ENCODE measurements at regions of chr12 and their contacts with region 1.

Region 1: GRCh38 chr12:6851921-6852650 is at the start of gene USP5:
- DNase-seq: peak; percentile 99
- H3K4me3 Mint-ChIP-seq: peak within 1 kb of the TSS; percentile 86
- H3K27ac Mint-ChIP-seq: peak within 1 kb of the TSS; percentile 93
- H3K4me1 Mint-ChIP-seq: peaks cover 35% of the 10 kb centered on the region
- H3K27me3 Mint-ChIP-seq: no peaks in the 10 kb centered on the region
- total RNA-seq, gene USP5: 115 to 123 TPM

Region 2: GRCh38 chr12:6493497-6494257 is 358.4 kb before region 1 on chr12 and contains the start of gene NCAPD2:
- CTCF ChIA-PET with region 1: no interaction called
- intact Hi-C with region 1: loop called (anchors 1 kb)
- DNase-seq: peak; percentile 98
- H3K4me3 Mint-ChIP-seq: peak within 1 kb of the TSS; percentile 98
- H3K27ac Mint-ChIP-seq: peak within 1 kb of the TSS; percentile 99
- H3K4me1 Mint-ChIP-seq: peaks cover 33% of the 10 kb centered on the region
- H3K27me3 Mint-ChIP-seq: no peaks in the 10 kb centered on the region
- total RNA-seq, gene NCAPD2: 252 to 261 TPM

Region 3: GRCh38 chr12:6662906-6663742 is 189.0 kb before region 1 on chr12 and contains the start of gene ING4:
- CTCF ChIA-PET with region 1: no interaction called
- intact Hi-C with region 1: loop called (anchors 1 kb)
- DNase-seq: peak; percentile 99
- H3K4me3 Mint-ChIP-seq: peak within 1 kb of the TSS; percentile 86
- H3K27ac Mint-ChIP-seq: peak within 1 kb of the TSS; percentile 88
- H3K4me1 Mint-ChIP-seq: peaks cover 25% of the 10 kb centered on the region
- H3K27me3 Mint-ChIP-seq: no peaks in the 10 kb centered on the region
- total RNA-seq, gene ING4: 17.3 to 17.8 TPM

Region 4: GRCh38 chr12:6792522-6793201 is 59.4 kb before region 1 on chr12:
- CTCF ChIA-PET with region 1: no interaction called
- intact Hi-C with region 1: loop called (anchors 1 kb)
- DNase-seq: peak; percentile 61
- H3K4me3 Mint-ChIP-seq: peak overlapping the region; percentile 97
- H3K27ac Mint-ChIP-seq: peak overlapping the region; percentile 96
- H3K4me1 Mint-ChIP-seq: peaks cover 51% of the 10 kb centered on the region
- H3K27me3 Mint-ChIP-seq: no peaks in the 10 kb centered on the region

Region 5: DNA sequence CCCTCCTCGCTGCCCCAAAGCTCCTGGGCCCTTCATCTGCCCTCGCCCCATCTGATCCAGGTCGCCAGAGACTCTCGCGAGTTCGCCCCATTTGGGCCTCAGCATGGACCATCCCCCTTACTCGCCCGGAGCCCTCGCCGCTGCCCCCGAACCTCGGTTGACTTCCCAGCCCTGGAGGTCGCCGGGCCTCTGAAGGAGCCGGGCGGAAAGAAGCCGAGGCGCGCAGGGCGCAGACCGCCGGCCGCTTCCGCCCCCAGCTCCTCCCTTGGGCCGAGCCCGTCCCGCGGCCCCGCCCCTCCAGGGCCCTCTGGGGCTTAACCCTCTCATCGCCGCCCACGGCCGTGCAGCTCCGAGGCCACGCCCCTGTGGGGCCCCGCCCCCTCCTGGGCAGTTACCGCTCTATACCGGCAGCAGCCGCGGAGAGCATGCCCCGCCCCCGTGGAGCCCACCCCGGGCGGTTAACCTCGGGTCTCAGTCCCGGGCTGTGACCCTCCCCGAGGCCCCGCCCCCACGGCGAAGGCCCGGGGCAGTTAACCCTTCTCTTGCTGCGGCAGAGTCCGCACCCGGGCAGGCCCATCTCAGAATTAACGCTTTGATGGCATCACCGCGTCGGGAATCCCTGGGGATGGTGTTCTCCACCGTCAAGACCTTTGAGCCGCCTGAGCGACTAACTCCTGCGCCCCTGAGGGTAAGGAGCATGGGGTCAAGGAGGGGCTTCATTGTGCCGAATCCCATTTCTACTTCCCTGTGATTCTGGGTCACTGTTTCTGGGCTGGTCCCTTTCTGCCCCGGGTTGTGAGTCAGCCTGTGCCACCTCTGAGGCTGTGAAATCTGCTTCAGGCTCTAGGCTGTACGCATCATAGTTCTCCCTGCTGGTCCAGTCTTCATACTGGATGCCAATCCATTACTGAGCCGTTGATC is 21.3 kb after region 1 on chr12 and contains the start of gene SPSB2:
- CTCF ChIA-PET with region 1: interaction called, 24 read pairs
- intact Hi-C with region 1: loop called (anchors 1 kb)
- DNase-seq: peak; percentile 99
- H3K4me3 Mint-ChIP-seq: peak within 1 kb of the TSS; percentile 88
- H3K27ac Mint-ChIP-seq: peak within 1 kb of the TSS; percentile 81
- H3K4me1 Mint-ChIP-seq: peaks cover 45% of the 10 kb centered on the region
- H3K27me3 Mint-ChIP-seq: no peaks in the 10 kb centered on the region
- total RNA-seq, gene SPSB2: 2.6 to 2.8 TPM

Region 6: GRCh38 chr12:6944381-6945186 is 92.5 kb after region 1 on chr12:
- CTCF ChIA-PET with region 1: no interaction called
- intact Hi-C with region 1: loop called (anchors 1 kb)
- DNase-seq: peak; percentile 96
- H3K4me3 Mint-ChIP-seq: peak overlapping the region; percentile 94
- H3K27ac Mint-ChIP-seq: peak overlapping the region; percentile 93
- H3K4me1 Mint-ChIP-seq: peaks cover 49% of the 10 kb centered on the region
- H3K27me3 Mint-ChIP-seq: no peaks in the 10 kb centered on the region

Region 7: GRCh38 chr12:7188562-7189397 is 336.7 kb after region 1 on chr12:
- CTCF ChIA-PET with region 1: no interaction called
- intact Hi-C with region 1: loop called (anchors 1 kb)
- DNase-seq: peak; percentile 87
- H3K4me3 Mint-ChIP-seq: peak overlapping the region; percentile 88
- H3K27ac Mint-ChIP-seq: peak overlapping the region; percentile 95
- H3K4me1 Mint-ChIP-seq: peaks cover 36% of the 10 kb centered on the region
- H3K27me3 Mint-ChIP-seq: no peaks in the 10 kb centered on the region

Measured in activated naive CD4-positive, alpha-beta T cell treated with anti-CD3 and anti-CD28 coated beads for 36 hours (primary cell).